ENCODE measurements at regions of chr5 and their contacts with region 1.

Region 1: GRCh38 chr5:129904102-129904666 is at the start of gene CHSY3:
- DNase-seq: peak; percentile 36 to 95
- H3K4me3 ChIP-seq: peak within 1 kb of the TSS; percentile 81 to 90
- H3K27ac ChIP-seq: peak within 1 kb of the TSS; percentile 95 to 97
- H3K4me1 ChIP-seq: peaks cover 0 to 4% of the 10 kb centered on the region in 2 donors
- H3K27me3 ChIP-seq: no peaks in the 10 kb centered on the region
- CTCF ChIP-seq: peak in 2 of 3 experiments; percentile 5 to 53
- total RNA-seq, gene CHSY3: 51.3 TPM

Region 2: GRCh38 chr5:129547137-129547536 is 357.0 kb before region 1 on chr5:
- intact Hi-C with region 1: no loop called
- DNase-seq: no peak
- H3K4me3 ChIP-seq: no peak overlapping the region
- H3K27ac ChIP-seq: no peak overlapping the region
- H3K4me1 ChIP-seq: no peaks in the 10 kb centered on the region
- H3K27me3 ChIP-seq: no peaks in the 10 kb centered on the region
- CTCF ChIP-seq: no peak

Region 3: DNA sequence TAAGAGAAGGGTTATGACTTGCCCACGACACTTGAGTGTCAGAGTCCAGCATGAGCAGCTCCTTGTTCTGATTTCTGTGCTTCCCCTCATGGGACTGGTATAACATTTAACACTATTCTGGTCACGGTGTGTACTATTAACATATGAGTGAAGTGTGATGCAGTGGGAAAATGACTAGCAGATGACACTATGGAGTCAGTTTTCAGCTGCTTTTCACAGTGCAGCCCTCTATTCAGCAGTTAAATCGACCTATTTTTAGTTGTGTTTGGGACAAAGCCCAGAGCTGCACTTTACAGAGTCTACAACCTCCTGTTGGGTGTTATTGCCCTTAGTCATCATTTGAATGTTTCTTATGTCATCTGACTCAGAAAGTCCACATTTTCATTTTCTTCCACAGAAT is 59.2 kb after region 1 on chr5:
- intact Hi-C with region 1: loop called (anchors 2 kb)
- DNase-seq: peak in 1 of 2 donors; percentile 64
- H3K4me3 ChIP-seq: no peak overlapping the region
- H3K27ac ChIP-seq: peak overlapping the region; percentile 74 to 75
- H3K4me1 ChIP-seq: peaks cover 0 to 17% of the 10 kb centered on the region in 2 donors
- H3K27me3 ChIP-seq: no peaks in the 10 kb centered on the region
- CTCF ChIP-seq: no peak

Region 4: GRCh38 chr5:130066644-130067043 is 162.5 kb after region 1 on chr5:
- intact Hi-C with region 1: loop called (anchors 5 kb)
- DNase-seq: peak in 1 of 2 donors; percentile 65
- H3K4me3 ChIP-seq: no peak overlapping the region
- H3K27ac ChIP-seq: peak overlapping the region; percentile 79 to 81
- H3K4me1 ChIP-seq: peaks cover 0 to 21% of the 10 kb centered on the region in 2 donors
- H3K27me3 ChIP-seq: no peaks in the 10 kb centered on the region
- CTCF ChIP-seq: no peak

Region 5: GRCh38 chr5:130135506-130135905 is 231.3 kb after region 1 on chr5:
- intact Hi-C with region 1: loop called (anchors 2 kb)
- DNase-seq: no peak
- H3K4me3 ChIP-seq: no peak overlapping the region
- H3K27ac ChIP-seq: peak overlapping the region; percentile 90 to 91
- H3K4me1 ChIP-seq: peaks cover 7 to 38% of the 10 kb centered on the region in 2 donors
- H3K27me3 ChIP-seq: no peaks in the 10 kb centered on the region
- CTCF ChIP-seq: no peak

Region 6: GRCh38 chr5:130549884-130550561 is 645.8 kb after region 1 on chr5:
- intact Hi-C with region 1: loop called (anchors 5 kb)
- DNase-seq: no peak
- H3K4me3 ChIP-seq: no peak overlapping the region
- H3K27ac ChIP-seq: peak overlapping the region in 1 of 2 donors; percentile 55
- H3K4me1 ChIP-seq: peaks cover 0 to 8% of the 10 kb centered on the region in 2 donors
- H3K27me3 ChIP-seq: no peaks in the 10 kb centered on the region
- CTCF ChIP-seq: no peak

Region 7: GRCh38 chr5:131165119-131165727 is 1261.0 kb after region 1 on chr5 and contains the start of gene HINT1:
- intact Hi-C with region 1: loop called (anchors 2 kb)
- DNase-seq: peak; percentile 53 to 94
- H3K4me3 ChIP-seq: peak within 1 kb of the TSS; percentile 82 to 83
- H3K27ac ChIP-seq: peak within 1 kb of the TSS; percentile 92 to 94
- H3K4me1 ChIP-seq: peaks cover 3 to 13% of the 10 kb centered on the region in 2 donors
- H3K27me3 ChIP-seq: no peaks in the 10 kb centered on the region
- CTCF ChIP-seq: no peak
- total RNA-seq, gene HINT1: 78.9 TPM

Region 8: DNA sequence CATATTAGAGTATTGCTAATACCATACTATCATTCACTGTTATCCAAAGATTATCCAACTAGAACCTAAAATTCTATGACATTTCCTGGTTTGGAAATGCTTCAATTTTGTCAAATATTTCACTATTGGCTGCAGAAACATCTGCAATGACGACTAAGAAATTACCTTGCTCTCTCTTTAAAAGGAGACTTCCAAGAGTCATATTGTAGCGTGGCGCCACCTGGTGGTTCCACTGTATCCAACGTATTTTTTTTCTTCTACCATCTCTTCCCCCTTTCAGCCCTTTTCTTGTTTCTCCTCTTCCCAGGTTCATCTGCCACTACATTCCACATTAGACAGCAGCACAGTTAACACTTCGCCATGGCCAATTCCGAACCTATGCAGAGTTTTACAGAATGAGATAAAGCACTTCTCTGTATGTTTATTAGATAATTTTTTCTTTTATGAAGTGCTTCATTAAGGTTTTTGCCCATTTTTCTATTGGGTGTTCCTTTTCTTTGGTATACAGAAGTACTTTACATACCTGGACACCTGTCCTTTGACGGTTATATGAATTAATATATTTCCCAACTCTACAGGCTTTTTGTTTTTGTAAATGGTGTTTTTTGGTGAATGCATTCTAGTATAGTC is 1513.2 kb after region 1 on chr5:
- intact Hi-C with region 1: loop called (anchors 5 kb)
- DNase-seq: peak in 1 of 2 donors; percentile 79
- H3K4me3 ChIP-seq: no peak overlapping the region
- H3K27ac ChIP-seq: no peak overlapping the region
- H3K4me1 ChIP-seq: peaks cover 0 to 4% of the 10 kb centered on the region in 2 donors
- H3K27me3 ChIP-seq: no peaks in the 10 kb centered on the region
- CTCF ChIP-seq: peak; percentile 56 to 85 (median 81)

Measured in ascending aorta (tissue), 2 donors.